ENCODE measurements at regions of chr3 and their contacts with region 1.

Region 1: GRCh38 chr3:41961750-41962679 is at the start of gene ULK4:
- DNase-seq: peak; percentile 94 to 99
- H3K4me3 ChIP-seq: peak within 1 kb of the TSS; percentile 63 to 99
- H3K27ac ChIP-seq: peak within 1 kb of the TSS; percentile 73 to 89
- H3K4me1 ChIP-seq: peaks cover 0 to 9% of the 10 kb centered on the region in 2 donors
- H3K27me3 ChIP-seq: no peaks in the 10 kb centered on the region
- CTCF ChIP-seq: no peak
- total RNA-seq, gene ULK4: 4.2 TPM

Region 2: DNA sequence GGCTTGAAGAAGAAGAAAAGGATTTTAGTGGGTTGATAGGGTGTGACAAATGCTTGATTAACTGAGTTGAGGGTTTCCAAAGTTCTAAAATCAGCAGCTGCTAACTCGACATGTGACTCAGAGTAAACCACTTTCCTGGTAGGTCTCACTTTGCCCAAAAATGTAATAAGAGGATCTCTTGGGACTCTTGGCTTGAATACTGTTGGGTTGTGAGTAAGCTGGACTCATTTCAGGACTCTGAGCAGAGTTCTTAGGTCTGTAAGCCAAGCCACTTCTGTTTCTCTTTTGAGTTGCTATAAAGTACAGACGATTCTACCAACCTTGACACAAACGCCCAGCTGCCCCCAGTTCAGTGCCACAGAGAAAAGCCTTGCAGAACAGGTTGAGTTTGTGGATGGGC is 1196.1 kb before region 1 on chr3:
- intact Hi-C with region 1: loop called (anchors 5 kb)
- DNase-seq: peak in 1 of 2 donors; percentile 71
- H3K4me3 ChIP-seq: peak overlapping the region in 1 of 2 donors; percentile 31
- H3K27ac ChIP-seq: peak overlapping the region; percentile 15 to 21
- H3K4me1 ChIP-seq: peaks cover 2 to 19% of the 10 kb centered on the region in 2 donors
- H3K27me3 ChIP-seq: no peaks in the 10 kb centered on the region
- CTCF ChIP-seq: no peak

Region 3: GRCh38 chr3:42012935-42013690 is 51.1 kb after region 1 on chr3:
- intact Hi-C with region 1: loop called (anchors 1 kb)
- DNase-seq: peak in 1 of 2 donors; percentile 83
- H3K4me3 ChIP-seq: peak overlapping the region; percentile 64 to 82
- H3K27ac ChIP-seq: peak overlapping the region; percentile 74 to 83
- H3K4me1 ChIP-seq: peaks cover 0 to 11% of the 10 kb centered on the region in 2 donors
- H3K27me3 ChIP-seq: no peaks in the 10 kb centered on the region
- CTCF ChIP-seq: no peak

Region 4: DNA sequence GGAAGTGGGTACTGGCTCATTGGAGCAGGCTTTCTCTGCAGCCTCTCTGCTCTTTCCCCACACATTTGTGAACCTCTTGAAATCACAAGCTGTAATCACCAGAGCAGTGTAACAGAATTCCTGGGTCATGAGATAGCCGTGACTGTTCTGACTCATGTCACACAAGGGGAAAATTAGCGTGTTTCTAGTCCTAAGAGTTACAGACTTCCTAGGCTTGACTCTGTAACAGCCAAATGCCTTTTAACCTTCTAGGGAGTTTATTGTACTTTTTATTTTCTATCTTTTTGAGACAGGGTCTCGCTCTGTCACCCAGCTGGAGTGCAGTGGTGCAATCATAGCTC is 74.4 kb after region 1 on chr3:
- intact Hi-C with region 1: no loop called
- DNase-seq: peak in 1 of 2 donors; percentile 80
- H3K4me3 ChIP-seq: no peak overlapping the region
- H3K27ac ChIP-seq: peak overlapping the region; percentile 67 to 81
- H3K4me1 ChIP-seq: peaks cover 15 to 53% of the 10 kb centered on the region in 2 donors
- H3K27me3 ChIP-seq: no peaks in the 10 kb centered on the region
- CTCF ChIP-seq: no peak

Region 5: GRCh38 chr3:42099011-42099765 is 137.2 kb after region 1 on chr3:
- intact Hi-C with region 1: loop called (anchors 2 kb)
- DNase-seq: peak in 1 of 2 donors; percentile 63
- H3K4me3 ChIP-seq: no peak overlapping the region
- H3K27ac ChIP-seq: peak overlapping the region in 1 of 2 donors; percentile 42
- H3K4me1 ChIP-seq: peaks cover 10 to 41% of the 10 kb centered on the region in 2 donors
- H3K27me3 ChIP-seq: no peaks in the 10 kb centered on the region
- CTCF ChIP-seq: no peak

Region 6: GRCh38 chr3:42214565-42215283 is 252.7 kb after region 1 on chr3:
- intact Hi-C with region 1: no loop called
- DNase-seq: no peak
- H3K4me3 ChIP-seq: no peak overlapping the region
- H3K27ac ChIP-seq: no peak overlapping the region
- H3K4me1 ChIP-seq: no peaks in the 10 kb centered on the region
- H3K27me3 ChIP-seq: no peaks in the 10 kb centered on the region
- CTCF ChIP-seq: no peak